HEK293T (cell line): ENCODE measurements at regions of chr1 and their contacts with region 1.

Region 1: DNA sequence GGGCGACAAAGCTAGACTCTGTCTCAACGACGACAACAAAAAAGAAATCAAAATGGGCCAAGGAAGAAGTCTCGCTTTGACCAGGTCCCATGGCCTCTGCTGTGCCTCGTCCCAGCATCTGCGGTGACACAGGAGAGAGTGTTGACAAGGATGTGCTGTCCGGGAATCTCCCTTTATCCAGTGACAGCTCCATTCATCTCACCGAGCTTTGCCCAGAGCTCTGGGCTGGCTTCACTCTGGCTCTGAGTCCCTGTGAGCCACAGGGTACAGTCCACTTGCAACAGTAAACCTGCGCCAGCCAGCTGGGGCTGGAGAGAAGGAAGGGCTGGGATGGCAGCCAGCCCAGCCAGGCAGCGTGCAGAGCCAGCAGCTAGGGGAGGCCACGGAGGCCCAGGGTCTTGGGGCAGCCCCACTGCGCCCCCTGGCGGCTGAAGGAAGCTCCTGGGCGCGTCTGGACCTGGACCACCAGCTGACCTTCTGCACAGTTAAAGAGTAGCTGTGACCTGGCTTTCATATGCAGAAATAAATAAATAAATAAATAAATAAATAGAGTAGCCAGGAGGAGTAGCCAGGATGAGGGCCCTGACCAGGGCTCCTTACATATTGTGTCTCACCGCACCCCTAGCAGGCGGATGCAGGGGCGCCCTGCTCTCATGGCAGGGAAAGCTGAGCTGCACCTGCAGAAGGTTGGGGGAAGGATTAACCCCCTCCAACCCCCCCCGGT is 29.7 kb downstream of the ENO1 start:
- DNase-seq: peak; percentile 92

Region 2: GRCh38 chr1:8727809-8728213 is 121.0 kb before region 1 on chr1:
- CTCF ChIA-PET with region 1: interaction called, 20 read pairs
- POLR2A ChIA-PET with region 1: no interaction called
- DNase-seq: no peak

Region 3: GRCh38 chr1:8780405-8780804 is 68.4 kb before region 1 on chr1:
- CTCF ChIA-PET with region 1: no interaction called
- POLR2A ChIA-PET with region 1: no interaction called
- DNase-seq: no peak

Region 4: DNA sequence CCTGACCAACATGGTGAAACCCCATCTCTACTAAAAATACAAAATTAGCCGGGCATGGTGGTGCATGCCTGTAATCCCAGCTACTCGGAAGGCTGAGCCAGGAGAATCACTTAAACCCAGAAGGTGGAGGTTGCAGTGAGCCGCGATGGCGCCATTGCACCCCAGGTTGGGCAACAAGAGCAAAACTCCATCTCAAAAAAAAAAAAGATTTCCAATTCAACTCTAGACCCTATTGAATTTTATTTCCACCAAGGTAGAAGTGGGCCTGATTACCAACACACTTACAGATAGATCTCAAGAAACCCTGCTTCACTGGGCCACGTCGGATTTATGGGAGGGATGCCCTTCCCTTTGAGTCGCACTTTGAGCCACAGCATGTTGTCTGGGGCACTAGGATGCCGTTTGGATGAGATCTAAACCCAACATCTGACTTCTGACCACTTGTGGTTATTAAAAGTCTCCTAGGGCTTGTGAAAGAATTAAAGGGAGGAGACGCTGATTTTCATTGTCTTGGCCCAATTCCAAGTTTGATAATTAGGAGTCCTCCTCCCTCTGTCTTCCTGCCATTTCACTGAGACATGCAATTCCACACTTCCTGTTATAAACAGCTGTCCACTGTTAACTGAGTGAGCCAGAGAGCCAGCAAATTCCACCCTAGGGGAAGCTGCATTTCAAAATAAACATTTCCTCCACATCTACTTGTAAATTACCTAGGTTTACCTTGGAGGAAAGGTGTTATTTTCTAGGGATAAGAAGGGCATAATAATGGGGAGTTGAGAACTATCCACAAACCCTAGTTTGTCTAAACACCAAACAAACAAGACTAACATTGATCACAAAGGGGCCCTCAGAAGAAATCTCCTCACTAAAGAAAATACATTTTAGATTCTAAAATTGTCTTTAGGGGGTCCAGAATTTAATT is 26.2 kb before region 1 on chr1:
- CTCF ChIA-PET with region 1: interaction called, 18 read pairs
- POLR2A ChIA-PET with region 1: interaction called, 4 read pairs
- DNase-seq: peak; percentile 50

Region 5: GRCh38 chr1:8858888-8859706 is 10.3 kb after region 1 on chr1:
- CTCF ChIA-PET with region 1: interaction called, 35 read pairs
- POLR2A ChIA-PET with region 1: interaction called, 3 read pairs
- DNase-seq: peak; percentile 55

Region 6: GRCh38 chr1:8908388-8909151 is 59.7 kb after region 1 on chr1:
- CTCF ChIA-PET with region 1: no interaction called
- POLR2A ChIA-PET with region 1: no interaction called
- DNase-seq: no peak